Right cardiac atrium (tissue), 5 donors: ENCODE measurements at regions of chr3 and their contacts with region 1.

Region 1: GRCh38 chr3:46866720-46867549 is 3.7 kb upstream of the MYL3 start:
- DNase-seq: peak; percentile 89 to 97 (median 96)
- ATAC-seq: peak; percentile 32 to 67
- H3K4me3 ChIP-seq: no peak overlapping the region
- H3K27ac ChIP-seq: peak overlapping the region; percentile 60
- H3K4me1 ChIP-seq: peaks cover 25% of the 10 kb centered on the region
- H3K27me3 ChIP-seq: no peaks in the 10 kb centered on the region

Region 2: GRCh38 chr3:46903331-46904071 is 36.6 kb after region 1 on chr3:
- intact Hi-C with region 1: loop called in 2 of 4 experiments (anchors 5 kb)
- DNase-seq: peak; percentile 59 to 72 (median 66)
- ATAC-seq: peak in 1 of 2 donors; percentile 10
- H3K4me3 ChIP-seq: no peak overlapping the region
- H3K27ac ChIP-seq: no peak overlapping the region
- H3K4me1 ChIP-seq: peaks cover 1% of the 10 kb centered on the region
- H3K27me3 ChIP-seq: no peaks in the 10 kb centered on the region